ENCODE measurements at regions of chr5 and their contacts with region 1.

Region 1: GRCh38 chr5:135324897-135325650 is 74.0 kb downstream of the MACROH2A1 start:
- DNase-seq: peak; percentile 56 to 72
- H3K4me3 ChIP-seq: no peak overlapping the region
- H3K27ac ChIP-seq: no peak overlapping the region
- H3K4me1 ChIP-seq: peaks cover 10% of the 10 kb centered on the region
- H3K27me3 ChIP-seq: no peaks in the 10 kb centered on the region
- CTCF ChIP-seq: no peak

Region 2: GRCh38 chr5:134289509-134290113 is 1035.5 kb before region 1 on chr5:
- CTCF ChIA-PET with region 1: no interaction called
- POLR2A ChIA-PET with region 1: no interaction called
- intact Hi-C with region 1: no loop called
- DNase-seq: peak; percentile 48 to 74
- H3K4me3 ChIP-seq: no peak overlapping the region
- H3K27ac ChIP-seq: no peak overlapping the region
- H3K4me1 ChIP-seq: no peaks in the 10 kb centered on the region
- H3K27me3 ChIP-seq: no peaks in the 10 kb centered on the region
- CTCF ChIP-seq: peak; percentile 91

Region 3: GRCh38 chr5:135174315-135175096 is 150.6 kb before region 1 on chr5:
- CTCF ChIA-PET with region 1: no interaction called
- POLR2A ChIA-PET with region 1: no interaction called
- intact Hi-C with region 1: no loop called
- DNase-seq: no peak
- H3K4me3 ChIP-seq: no peak overlapping the region
- H3K27ac ChIP-seq: no peak overlapping the region
- H3K4me1 ChIP-seq: peaks cover 3% of the 10 kb centered on the region; the same call in 1 of the 2 replicates
- H3K27me3 ChIP-seq: no peaks in the 10 kb centered on the region
- CTCF ChIP-seq: no peak

Region 4: DNA sequence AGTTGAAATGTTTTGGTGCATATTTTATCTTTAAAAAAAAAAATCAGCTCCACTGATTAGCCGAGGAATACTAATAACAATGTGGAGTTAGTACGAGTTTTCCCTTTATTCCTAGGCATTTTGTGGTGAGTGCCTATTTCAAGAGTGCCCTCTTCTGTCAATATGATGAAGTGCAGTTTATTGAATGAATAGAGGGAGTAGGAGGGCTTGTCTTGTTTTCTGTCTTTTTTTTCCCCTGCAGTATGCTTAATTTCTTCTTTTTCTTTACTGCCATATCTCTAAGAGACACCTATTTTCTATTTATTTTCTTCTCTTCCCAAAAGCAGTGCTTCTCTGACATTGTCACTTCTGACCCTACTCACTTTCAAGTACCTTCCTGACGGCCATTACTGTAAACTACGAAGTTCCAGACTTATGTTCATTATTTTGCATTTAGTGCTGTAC is 121.5 kb before region 1 on chr5:
- CTCF ChIA-PET with region 1: interaction called, 3 read pairs
- POLR2A ChIA-PET with region 1: no interaction called
- intact Hi-C with region 1: loop called (anchors 1 kb)
- DNase-seq: peak in 1 of 2 experiments; percentile 46
- H3K4me3 ChIP-seq: no peak overlapping the region
- H3K27ac ChIP-seq: no peak overlapping the region
- H3K4me1 ChIP-seq: peaks cover 16% of the 10 kb centered on the region
- H3K27me3 ChIP-seq: no peaks in the 10 kb centered on the region
- CTCF ChIP-seq: peak; percentile 66

Region 5: DNA sequence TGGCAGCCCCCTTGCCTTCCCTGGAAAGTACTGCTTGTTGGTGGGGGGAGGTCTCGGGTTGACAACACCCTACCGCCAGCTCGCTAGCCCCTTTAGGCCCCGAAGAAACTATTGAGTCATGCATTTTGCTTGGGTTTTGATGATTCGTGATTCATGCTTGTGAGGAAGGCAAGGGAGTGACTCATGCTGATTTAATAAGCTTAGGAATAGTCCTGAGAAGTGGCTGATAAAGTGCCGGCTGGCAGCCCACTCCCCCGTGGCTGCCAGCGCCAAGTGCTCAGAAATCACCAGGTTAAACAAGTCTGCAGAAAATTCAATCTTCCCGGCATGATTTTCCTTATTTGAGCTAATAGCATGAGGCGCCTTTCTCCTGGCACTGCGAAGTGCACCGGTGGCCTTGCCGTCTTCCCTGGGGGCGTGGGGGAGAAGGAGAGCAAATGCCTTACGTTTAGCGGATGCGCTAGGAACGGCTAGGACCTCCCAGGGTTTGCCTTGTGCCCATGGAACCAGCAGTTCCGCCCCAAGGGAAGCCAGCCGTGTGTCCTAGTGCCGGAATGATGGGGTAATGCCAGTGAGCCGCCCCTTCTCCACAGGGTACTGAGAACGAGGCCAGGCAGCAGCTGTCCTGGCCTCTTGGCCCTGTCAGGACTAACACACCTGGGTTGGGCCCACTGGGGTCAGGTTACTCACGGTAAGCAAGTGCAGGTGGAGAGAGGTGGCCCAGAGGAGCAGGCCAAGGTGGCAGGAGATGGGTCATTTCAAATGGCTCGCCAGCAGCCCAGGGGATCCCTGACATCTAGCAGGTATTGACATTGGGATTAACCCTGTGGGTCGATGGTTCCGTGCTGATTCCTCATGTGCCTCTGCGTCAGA is 77.9 kb before region 1 on chr5:
- CTCF ChIA-PET with region 1: no interaction called
- POLR2A ChIA-PET with region 1: no interaction called
- intact Hi-C with region 1: no loop called
- DNase-seq: peak; percentile 31 to 90
- H3K4me3 ChIP-seq: peak overlapping the region; percentile 47; the same call in 1 of the 2 replicates
- H3K27ac ChIP-seq: peak overlapping the region; percentile 88
- H3K4me1 ChIP-seq: peaks cover 37% of the 10 kb centered on the region
- H3K27me3 ChIP-seq: no peaks in the 10 kb centered on the region
- CTCF ChIP-seq: no peak

Region 6: DNA sequence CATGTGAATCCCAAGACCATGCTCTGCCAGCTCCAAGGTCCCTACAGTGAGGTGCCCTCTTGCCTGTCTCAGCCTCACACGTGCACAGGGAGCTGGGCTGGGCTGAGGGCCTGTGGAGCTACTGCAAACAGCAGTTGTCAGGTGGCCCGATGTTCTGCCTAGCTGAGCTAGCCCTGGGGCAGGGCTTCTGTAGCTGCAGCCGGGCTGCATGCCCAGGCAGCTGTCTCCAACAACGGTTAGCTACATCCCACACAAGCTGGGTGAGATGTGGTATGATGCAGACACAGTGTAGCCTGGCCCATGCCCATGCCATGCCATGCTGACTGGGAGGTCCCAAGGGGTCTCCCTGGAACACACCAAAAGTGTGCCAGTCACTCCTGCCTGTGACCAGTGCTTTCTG is 12.0 kb after region 1 on chr5:
- CTCF ChIA-PET with region 1: no interaction called
- POLR2A ChIA-PET with region 1: no interaction called
- intact Hi-C with region 1: no loop called
- DNase-seq: no peak
- H3K4me3 ChIP-seq: no peak overlapping the region
- H3K27ac ChIP-seq: no peak overlapping the region
- H3K4me1 ChIP-seq: no peaks in the 10 kb centered on the region
- H3K27me3 ChIP-seq: no peaks in the 10 kb centered on the region
- CTCF ChIP-seq: no peak